ENCODE measurements at regions of chr1 and their contacts with region 1.

Region 1: DNA sequence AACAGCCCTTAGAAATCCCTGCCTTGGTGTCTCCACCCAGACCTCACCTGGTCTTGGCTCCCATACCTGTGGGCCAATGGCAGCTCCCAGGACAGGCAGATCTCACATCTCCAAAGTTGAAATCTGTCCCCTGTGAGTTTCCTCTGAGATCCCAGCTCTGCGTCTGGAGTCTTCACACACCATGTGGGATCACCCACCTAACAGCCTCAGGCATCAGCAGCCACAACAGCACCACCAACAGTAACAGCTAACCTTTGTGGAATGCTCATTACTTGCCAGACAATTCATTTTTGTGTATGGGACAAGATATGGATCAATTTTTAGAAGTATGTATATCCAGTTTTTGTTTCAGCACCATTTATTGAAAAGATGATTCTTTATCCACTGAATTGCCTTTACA is 523.2 kb downstream of the MATN1 start:
- DNase-seq: no peak
- H3K4me3 Mint-ChIP-seq: no peak overlapping the region
- H3K27ac Mint-ChIP-seq: no peak overlapping the region
- H3K4me1 Mint-ChIP-seq: no peaks in the 10 kb centered on the region
- H3K27me3 Mint-ChIP-seq: peaks cover 7% of the 10 kb centered on the region

Region 2: DNA sequence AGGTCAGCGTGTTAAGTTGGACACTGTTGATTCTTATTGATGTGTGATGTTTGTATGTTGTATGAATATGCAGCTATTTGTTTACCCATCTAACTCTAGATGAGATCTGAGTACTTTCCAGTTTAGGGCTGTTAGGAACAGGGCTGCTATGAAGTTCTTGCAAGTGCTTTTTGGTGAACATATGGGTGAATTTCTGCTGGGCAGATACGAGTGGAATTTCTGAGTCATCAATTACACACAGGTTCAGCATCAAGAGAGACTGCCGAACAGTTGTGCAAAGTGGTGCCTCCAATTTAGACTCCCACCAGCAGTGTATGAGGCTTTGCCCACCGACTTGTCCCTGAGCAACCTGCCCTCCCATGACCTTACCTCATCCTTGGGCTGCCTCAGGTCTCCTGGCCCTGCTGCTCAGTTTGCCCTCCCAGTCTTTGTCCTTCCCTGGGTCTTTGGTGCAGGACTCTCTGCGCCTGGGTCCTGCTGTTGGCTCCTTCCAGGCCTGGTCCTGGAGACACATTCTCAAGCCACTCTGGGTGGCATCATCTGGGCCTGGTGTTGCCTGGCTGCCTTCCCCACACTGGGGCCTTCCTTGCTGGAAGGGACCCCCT is 620.2 kb before region 1 on chr1:
- intact Hi-C with region 1: loop called (anchors 5 kb)
- DNase-seq: no peak
- H3K4me3 Mint-ChIP-seq: no peak overlapping the region
- H3K27ac Mint-ChIP-seq: no peak overlapping the region
- H3K4me1 Mint-ChIP-seq: no peaks in the 10 kb centered on the region
- H3K27me3 Mint-ChIP-seq: no peaks in the 10 kb centered on the region

Measured in activated CD4-positive, alpha-beta T cell treated with anti-CD3 and anti-CD28 coated beads, Interleukin-2, amount 10 ng/mL, durations not matched to agents 24 days and 14 days (primary cell).